SK-N-SH (cell line): ENCODE measurements at regions of chr9 and their contacts with region 1.

Region 1: GRCh38 chr9:129737479-129738274 is 15.2 kb downstream of the PTGES start:
- DNase-seq: peak; percentile 94
- H3K4me3 ChIP-seq: peak overlapping the region; percentile 49 to 70
- H3K27ac ChIP-seq: no peak overlapping the region
- H3K4me1 ChIP-seq: peaks cover 0 to 5% of the 10 kb centered on the region in 2 experiments; a peak in 1 of 4 replicates
- H3K27me3 ChIP-seq: no peaks in the 10 kb centered on the region
- CTCF ChIP-seq: peak; percentile 92
- EP300 ChIP-seq: no peak
- RAD21 ChIP-seq: peak; percentile 79

Region 2: GRCh38 chr9:129641746-129642513 is 95.7 kb before region 1 on chr9 and contains the start of gene ASB6:
- CTCF ChIA-PET with region 1: interaction called, 26 read pairs
- POLR2A ChIA-PET with region 1: interaction called, 5 read pairs
- DNase-seq: peak; percentile 99
- H3K4me3 ChIP-seq: peak within 1 kb of the TSS; percentile 99 to 100
- H3K27ac ChIP-seq: peak within 1 kb of the TSS; percentile 64 to 92
- H3K4me1 ChIP-seq: peaks cover 18 to 31% of the 10 kb centered on the region in 2 experiments
- H3K27me3 ChIP-seq: no peaks in the 10 kb centered on the region
- CTCF ChIP-seq: peak; percentile 87
- EP300 ChIP-seq: no peak; a peak in 1 of 4 replicates
- RAD21 ChIP-seq: peak; percentile 94
- polyA plus RNA-seq, gene ASB6: 35.9 and 37.5 TPM in 2 replicates

Region 3: DNA sequence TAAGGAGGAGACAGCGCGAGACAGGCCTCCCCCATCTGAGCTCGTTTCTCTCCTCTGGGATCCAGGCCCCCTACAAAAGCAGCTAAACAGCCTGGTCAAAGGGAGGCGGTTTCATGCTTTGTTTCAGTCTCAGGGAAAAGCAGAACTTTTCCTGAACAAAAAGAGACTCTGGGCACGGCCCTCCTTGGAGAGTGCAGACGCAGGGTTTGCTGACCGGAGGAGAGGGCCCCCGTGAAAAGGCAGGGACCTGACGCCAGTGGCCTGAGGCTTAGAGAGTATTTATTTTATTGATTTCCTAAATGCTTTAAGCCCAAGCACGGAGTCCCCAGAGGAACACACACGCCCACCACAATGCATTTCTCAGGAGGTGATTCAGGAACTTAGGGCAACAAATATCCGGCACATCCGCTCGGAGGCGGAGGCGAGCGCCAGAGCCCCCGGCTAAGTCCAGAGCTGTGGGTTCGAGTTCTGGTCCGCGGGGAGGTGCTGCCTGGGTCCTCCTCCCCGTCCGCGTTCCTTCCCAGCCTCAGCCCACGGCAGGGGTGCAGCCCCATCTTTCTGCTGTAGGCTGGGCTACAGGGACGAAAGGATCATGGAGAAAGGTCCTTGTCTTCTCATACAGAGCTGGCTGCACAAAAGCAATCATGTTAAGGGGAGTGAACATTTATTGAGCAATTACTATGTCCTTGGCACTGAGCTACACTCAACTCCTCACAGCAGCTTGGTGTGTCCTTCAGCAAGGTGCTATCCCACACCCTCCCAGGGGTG is 24.9 kb before region 1 on chr9:
- CTCF ChIA-PET with region 1: interaction called, 10 read pairs
- POLR2A ChIA-PET with region 1: no interaction called
- DNase-seq: no peak
- H3K4me3 ChIP-seq: no peak overlapping the region
- H3K27ac ChIP-seq: no peak overlapping the region
- H3K4me1 ChIP-seq: no peaks in the 10 kb centered on the region; a peak in 1 of 4 replicates
- H3K27me3 ChIP-seq: no peaks in the 10 kb centered on the region; the same call in 1 of the 2 replicates
- CTCF ChIP-seq: no peak
- EP300 ChIP-seq: no peak
- RAD21 ChIP-seq: no peak

Region 4: DNA sequence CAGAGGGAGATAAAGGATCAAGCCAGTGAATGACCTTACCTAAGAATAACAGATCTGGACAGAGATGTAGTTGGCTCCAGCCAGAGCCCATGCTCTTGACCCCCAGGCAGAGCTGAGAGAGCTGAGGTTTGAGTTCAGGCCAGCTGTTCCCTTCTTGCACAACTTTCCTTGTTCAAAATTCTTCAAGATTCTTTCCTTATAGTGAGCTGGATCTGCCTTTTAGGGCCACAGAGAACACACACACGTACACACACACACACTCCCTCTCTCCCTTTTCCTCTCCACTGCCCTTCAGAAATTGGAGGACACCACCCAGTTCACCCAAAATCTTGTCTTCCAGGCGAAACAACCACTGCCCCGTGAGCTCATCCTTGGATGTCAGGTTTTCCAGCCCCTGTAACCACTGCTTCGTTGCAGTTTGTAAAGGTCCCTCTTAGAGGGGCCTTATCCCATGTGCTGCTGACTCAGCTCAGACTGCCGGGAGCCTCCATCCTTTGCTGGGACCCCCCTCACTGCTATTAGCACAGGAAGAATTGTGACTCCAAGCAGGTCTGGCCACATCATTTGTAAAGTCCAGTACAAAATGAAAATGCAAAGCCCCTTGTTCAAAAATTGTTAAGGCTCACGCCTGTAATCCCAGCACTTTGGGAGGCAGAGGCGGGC is 25.7 kb after region 1 on chr9:
- CTCF ChIA-PET with region 1: interaction called, 23 read pairs
- POLR2A ChIA-PET with region 1: no interaction called
- DNase-seq: no peak
- H3K4me3 ChIP-seq: no peak overlapping the region
- H3K27ac ChIP-seq: no peak overlapping the region
- H3K4me1 ChIP-seq: no peaks in the 10 kb centered on the region; a peak in 1 of 4 replicates
- H3K27me3 ChIP-seq: no peaks in the 10 kb centered on the region
- CTCF ChIP-seq: no peak
- EP300 ChIP-seq: no peak
- RAD21 ChIP-seq: no peak

Region 5: DNA sequence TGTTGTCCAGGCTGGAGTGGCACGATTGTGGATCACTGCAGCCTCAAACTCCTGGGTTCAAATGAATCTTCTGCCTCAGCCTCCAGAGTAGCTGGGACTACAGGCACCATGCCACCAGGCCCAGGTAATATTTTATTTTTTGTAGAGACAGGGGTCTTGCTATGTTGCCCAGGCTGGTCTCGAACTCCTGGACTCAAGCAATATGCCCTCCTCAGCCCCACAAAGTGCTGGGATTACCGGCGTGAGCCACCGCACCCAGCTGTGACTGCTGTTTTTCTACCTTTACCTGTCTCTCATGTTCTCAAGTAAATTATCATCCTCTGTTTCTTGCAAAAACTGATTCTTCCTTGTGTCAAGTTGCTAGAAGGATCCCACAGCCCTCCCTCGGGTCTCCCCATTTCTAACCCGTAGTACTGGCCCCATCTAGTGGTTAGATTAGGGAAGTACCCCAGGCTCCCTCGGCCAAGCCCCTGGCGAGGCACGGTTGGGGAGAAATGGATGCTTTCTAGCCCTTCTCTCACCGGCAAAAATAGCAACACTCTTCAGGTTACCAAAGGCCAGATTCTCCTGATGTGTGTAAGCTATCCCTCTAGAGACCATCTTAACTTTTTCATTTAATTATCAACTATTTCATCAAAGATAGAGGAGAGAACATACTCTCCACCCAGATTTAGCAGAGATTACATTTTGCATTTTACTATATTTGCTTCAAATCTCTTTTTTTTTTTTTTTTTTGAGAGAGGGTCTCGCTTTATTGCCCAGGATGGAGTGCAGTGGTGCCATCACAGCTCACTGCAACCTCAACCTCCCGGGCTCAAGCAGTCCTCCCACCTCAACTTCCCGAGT is 46.1 kb after region 1 on chr9:
- CTCF ChIA-PET with region 1: interaction called, 356 read pairs
- POLR2A ChIA-PET with region 1: interaction called, 4 read pairs
- DNase-seq: peak; percentile 91
- H3K4me3 ChIP-seq: no peak overlapping the region
- H3K27ac ChIP-seq: no peak overlapping the region
- H3K4me1 ChIP-seq: no peaks in the 10 kb centered on the region
- H3K27me3 ChIP-seq: no peaks in the 10 kb centered on the region; the same call in 1 of the 2 replicates
- CTCF ChIP-seq: peak; percentile 93
- EP300 ChIP-seq: no peak
- RAD21 ChIP-seq: peak; percentile 99

Region 6: GRCh38 chr9:130421802-130422276 is 684.2 kb after region 1 on chr9:
- CTCF ChIA-PET with region 1: no interaction called
- POLR2A ChIA-PET with region 1: no interaction called
- DNase-seq: peak; percentile 95
- H3K4me3 ChIP-seq: no peak overlapping the region; a peak in 1 of 4 replicates
- H3K27ac ChIP-seq: peak overlapping the region in 1 of 2 experiments; percentile 98; a peak in 2 of 4 replicates
- H3K4me1 ChIP-seq: peaks cover 21 to 55% of the 10 kb centered on the region in 2 experiments
- H3K27me3 ChIP-seq: no peaks in the 10 kb centered on the region; the same call in 1 of the 2 replicates
- CTCF ChIP-seq: no peak
- EP300 ChIP-seq: peak; percentile 57 to 97; a peak in 3 of 4 replicates
- RAD21 ChIP-seq: no peak